Activated CD4-positive, alpha-beta T cell treated with anti-CD3 and anti-CD28 coated beads, Interleukin-2, amount 10 ng/mL, durations not matched to agents 7 days and 5 days (primary cell): ENCODE measurements at regions of chr12 and their contacts with region 1.

Region 1: GRCh38 chr12:106194351-106194750 is 53.5 kb downstream of the CKAP4 start:
- DNase-seq: no peak
- H3K4me3 Mint-ChIP-seq: no peak overlapping the region
- H3K27ac Mint-ChIP-seq: no peak overlapping the region
- H3K4me1 Mint-ChIP-seq: no peaks in the 10 kb centered on the region
- H3K27me3 Mint-ChIP-seq: peaks cover 11% of the 10 kb centered on the region

Region 2: DNA sequence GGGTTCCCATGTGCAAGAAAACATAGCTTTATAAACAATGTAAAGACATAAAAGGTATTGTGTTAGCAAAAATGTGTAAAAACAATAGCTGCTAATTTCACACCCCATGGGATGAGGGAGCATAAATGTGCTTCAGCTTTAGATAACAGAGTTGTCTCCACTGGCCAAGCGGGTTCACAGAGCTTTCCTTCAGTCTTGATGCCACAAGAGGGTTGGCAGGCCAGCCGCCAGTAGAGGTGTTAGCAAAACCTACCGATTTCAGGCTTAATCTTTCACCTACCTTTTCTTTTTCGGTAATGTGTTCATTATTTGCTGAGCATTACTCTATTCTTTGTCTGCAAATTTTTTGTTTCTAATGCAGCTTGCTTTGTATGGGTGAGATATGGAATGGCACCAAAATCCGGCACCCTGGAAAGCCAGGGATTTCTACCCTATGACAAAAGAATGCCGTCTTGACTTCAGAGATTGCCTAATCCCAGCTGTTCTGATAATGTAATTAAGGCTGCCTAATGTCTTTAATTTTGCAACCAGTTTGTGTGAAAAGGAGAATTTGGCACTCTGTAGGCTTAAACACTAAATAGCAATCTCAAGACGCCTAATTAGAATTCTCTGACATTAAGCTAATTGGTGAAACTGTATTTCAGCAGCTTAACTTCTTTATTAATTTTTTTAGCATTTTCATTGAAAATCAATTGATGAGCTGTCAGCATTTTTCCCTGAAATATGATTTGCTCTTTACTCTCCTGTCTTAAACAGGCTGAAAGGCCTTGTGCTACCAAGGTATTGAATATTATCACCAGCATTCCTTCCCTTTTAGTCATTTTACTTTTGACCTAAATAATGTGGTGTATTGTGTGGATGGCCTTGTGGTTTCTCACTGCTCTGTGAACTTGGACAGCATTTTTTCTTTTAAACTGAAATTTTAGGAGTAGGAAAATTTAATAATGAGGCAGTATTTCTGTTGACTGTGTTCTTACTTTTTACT is 223.9 kb after region 1 on chr12:
- CTCF ChIA-PET with region 1: no interaction called
- POLR2A ChIA-PET with region 1: interaction called, 11 read pairs
- DNase-seq: no peak
- H3K4me3 Mint-ChIP-seq: no peak overlapping the region
- H3K27ac Mint-ChIP-seq: no peak overlapping the region
- H3K4me1 Mint-ChIP-seq: no peaks in the 10 kb centered on the region
- H3K27me3 Mint-ChIP-seq: no peaks in the 10 kb centered on the region